ENCODE measurements at regions of chr1 and their contacts with region 1.

Region 1: DNA sequence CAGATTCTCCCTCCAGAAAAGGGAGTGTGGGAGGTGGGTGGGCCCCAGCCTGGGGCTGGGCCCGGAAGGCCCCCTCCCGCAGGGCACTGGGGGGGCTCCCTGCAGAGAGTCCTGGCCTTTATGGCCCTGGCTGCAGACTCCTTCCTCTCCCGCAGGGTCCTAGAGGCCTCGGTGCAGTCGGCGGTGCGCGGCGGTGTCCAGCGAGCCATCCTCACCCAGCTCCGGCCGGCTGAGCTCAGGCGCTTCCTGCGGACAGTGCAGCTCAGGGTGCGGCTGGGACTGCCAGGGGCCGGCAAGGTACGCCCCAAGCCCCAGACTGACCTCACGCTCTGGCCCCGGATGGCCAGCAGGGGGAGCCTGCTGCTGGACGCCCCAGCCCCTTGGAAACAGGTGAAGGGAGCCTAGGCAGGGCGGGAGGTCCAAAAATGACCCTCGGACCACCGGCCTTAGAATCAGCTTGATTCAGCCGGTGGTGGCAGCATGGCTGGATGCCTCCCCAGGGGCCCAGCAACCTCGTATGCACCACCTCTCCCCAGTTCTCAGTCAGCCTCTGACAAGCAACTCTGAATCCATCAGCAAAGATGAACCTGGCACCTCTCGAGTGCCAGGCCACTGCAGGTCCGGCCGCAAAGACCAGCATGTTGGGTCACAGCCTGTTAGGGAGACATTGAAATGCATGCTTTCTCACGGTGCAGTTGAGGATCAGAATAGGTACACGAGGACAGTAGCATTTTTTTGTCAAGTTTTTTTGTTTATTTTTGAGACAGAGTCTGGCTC is 20.6 kb downstream of the MTHFR start:
- DNase-seq: peak; percentile 84 to 91
- H3K4me3 ChIP-seq: peak overlapping the region in 1 of 4 experiments; percentile 34; a peak in 4 of 8 replicates
- H3K27ac ChIP-seq: no peak overlapping the region
- H3K4me1 ChIP-seq: peaks cover 7 to 34% (median 25%) of the 10 kb centered on the region in 4 experiments
- H3K27me3 ChIP-seq: no peaks in the 10 kb centered on the region
- CTCF ChIP-seq: peak; percentile 87 to 95 (median 91)
- EP300 ChIP-seq: 0 out of 3 replicates have a peak, but pooled peaks of 1 of the 2 experiments have one; percentile 32
- POLR2A ChIP-seq: no peak
- RAD21 ChIP-seq: peak; percentile 43 to 68; a peak in 3 of 4 replicates

Region 2: DNA sequence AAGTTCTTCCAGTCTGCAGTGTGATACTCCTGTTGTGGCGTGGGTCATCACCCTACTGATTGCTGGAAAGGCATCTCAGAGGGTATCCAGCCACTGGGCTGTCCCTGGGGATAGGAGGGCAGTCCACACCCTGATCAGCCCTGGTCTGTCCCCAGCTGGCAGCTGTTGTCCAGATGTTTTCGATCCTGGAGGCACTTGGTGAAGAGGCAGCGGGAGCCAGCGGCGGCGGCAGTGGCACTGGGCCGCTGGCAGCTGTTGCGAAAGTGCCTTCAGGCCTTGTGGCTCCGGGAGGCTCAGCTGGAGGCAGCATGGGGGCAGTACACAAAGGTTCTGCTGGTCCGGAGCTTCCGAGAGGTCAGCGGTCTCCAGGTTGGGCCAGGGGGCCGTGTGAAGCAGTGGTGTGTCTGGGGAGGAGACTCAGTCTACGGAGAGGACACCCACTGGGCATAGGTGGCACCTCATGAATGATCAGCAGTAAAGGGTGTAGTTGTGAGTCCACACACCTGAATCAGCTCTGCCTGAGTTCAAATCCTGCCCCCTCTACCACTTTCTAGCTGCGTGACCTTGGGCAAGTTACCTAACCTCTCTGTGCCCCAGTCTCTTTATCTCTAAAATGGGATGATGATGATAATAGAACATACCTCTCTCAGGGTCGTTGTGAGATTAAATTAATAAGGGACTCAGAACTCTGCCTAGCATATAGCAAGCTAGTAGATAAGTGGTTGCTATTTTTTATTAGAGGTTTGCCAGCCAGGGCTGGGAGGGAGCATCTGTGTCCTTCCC is 17.1 kb before region 1 on chr1:
- CTCF ChIA-PET with region 1: interaction called, 21 read pairs
- POLR2A ChIA-PET with region 1: interaction called, 3 read pairs
- DNase-seq: no peak
- H3K4me3 ChIP-seq: no peak overlapping the region
- H3K27ac ChIP-seq: no peak overlapping the region
- H3K4me1 ChIP-seq: no peaks in the 10 kb centered on the region; a peak in 1 of 7 replicates
- H3K27me3 ChIP-seq: peaks cover 0 to 15% (median 3%) of the 10 kb centered on the region in 4 experiments; a peak in 4 of 7 replicates
- CTCF ChIP-seq: no peak
- EP300 ChIP-seq: no peak
- POLR2A ChIP-seq: no peak
- RAD21 ChIP-seq: no peak

Region 3: GRCh38 chr1:11797525-11798216 is 12.5 kb after region 1 on chr1:
- CTCF ChIA-PET with region 1: interaction called, 49 read pairs
- POLR2A ChIA-PET with region 1: interaction called, 27 read pairs
- DNase-seq: no peak
- H3K4me3 ChIP-seq: no peak overlapping the region
- H3K27ac ChIP-seq: no peak overlapping the region
- H3K4me1 ChIP-seq: peaks cover under 1 to 3% (median 2%) of the 10 kb centered on the region in 4 experiments; a peak in 6 of 7 replicates
- H3K27me3 ChIP-seq: no peaks in the 10 kb centered on the region
- CTCF ChIP-seq: no peak
- EP300 ChIP-seq: no peak
- POLR2A ChIP-seq: no peak
- RAD21 ChIP-seq: no peak

Region 4: DNA sequence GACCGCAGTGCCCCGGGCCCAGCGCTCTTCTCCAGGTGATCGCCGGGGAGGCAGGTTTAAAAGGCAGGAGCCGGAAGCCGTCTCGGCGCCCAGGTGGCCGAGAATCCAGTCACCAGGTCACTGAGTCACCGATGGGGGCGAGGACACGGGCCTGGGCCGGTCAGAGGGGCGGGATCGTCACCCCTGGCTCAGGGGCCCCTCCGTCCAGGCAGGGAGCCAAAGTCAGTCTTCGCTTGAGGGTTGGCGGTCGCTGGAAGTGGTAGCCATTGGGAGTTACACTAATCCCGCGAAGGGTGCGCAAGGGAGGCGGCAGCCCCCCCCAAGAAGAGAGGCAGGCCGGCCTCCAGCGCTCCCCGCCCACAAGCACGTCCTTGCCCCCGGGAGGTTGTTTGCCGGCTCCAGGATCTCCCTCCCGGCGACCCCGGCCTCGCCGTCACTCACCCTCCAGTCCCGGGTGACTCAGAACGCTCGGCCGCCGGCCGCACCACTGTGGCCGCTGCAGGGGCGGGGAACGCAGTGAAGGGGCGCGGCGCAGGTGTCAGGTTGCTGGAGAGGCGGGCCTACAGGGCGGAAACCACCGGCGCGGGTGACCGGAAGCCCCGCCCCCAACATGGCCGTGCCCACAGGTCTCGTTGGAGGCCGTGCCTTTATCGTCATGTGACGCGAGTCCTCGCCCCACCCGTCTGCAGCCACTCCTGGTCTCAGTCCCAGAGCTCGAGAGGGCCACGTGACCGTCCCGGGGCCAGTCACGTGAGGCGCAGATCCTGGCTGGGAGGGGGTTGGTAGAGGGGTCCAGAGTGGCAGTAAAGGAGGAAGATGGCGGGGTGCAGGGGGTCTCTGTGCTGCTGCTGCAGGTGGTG is 20.5 kb after region 1 on chr1 and contains the starts of genes CLCN6 and MTHFR:
- CTCF ChIA-PET with region 1: interaction called, 49 read pairs
- POLR2A ChIA-PET with region 1: interaction called, 27 read pairs
- DNase-seq: peak; percentile 98
- H3K4me3 ChIP-seq: peak within 1 kb of the TSS; percentile 76 to 88 (median 84)
- H3K27ac ChIP-seq: peak within 1 kb of the TSS; percentile 81
- H3K4me1 ChIP-seq: peaks cover 13 to 24% (median 18%) of the 10 kb centered on the region in 4 experiments
- H3K27me3 ChIP-seq: no peaks in the 10 kb centered on the region
- CTCF ChIP-seq: no peak
- EP300 ChIP-seq: peak in 1 of 2 experiments; percentile 86; a peak in 2 of 3 replicates
- POLR2A ChIP-seq: peak; percentile 20 to 67
- RAD21 ChIP-seq: no peak
- total RNA-seq, gene CLCN6: 25.5 and 26.0 TPM in 2 replicates
- total RNA-seq, gene MTHFR: 17.9 and 18.5 TPM in 2 replicates